ENCODE measurements at regions of chr12 and their contacts with region 1.

Region 1: DNA sequence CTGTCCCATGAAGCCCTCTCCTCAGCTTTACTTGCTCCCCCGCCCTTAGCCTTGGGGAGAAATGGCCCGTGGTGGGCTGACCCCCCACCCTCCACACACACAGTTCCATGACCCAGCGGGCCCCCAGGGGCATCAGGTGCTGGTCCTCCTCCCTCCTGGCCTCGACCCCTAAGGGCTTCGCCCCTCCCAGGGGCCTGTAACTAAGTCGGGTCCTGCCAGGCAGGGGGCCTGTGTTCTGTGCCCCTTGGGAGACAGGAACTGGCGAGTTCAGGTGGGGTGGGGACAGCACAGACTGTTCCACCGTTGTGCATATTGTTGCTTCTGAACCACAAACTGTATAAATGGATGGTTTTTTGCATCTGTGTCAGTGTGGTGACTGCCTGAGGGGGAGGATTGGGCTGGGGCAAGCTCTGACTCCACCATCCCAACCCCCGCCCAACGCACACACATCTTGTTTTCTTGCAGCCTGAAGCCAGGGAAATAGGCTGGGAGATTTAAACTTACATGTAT is 8.8 kb downstream of the TAMALIN start:
- DNase-seq: peak in 1 of 5 donors; percentile 20
- ATAC-seq: peak in 2 of 4 donors; percentile 4 to 12
- H3K4me3 ChIP-seq: no peak overlapping the region
- H3K27ac ChIP-seq: no peak overlapping the region
- H3K4me1 ChIP-seq: peaks cover 0 to 19% (median 11%) of the 10 kb centered on the region in 12 donors
- H3K27me3 ChIP-seq: peaks cover 0 to 8% (median 0%) of the 10 kb centered on the region in 9 donors
- CTCF ChIP-seq: no peak
- POLR2A ChIP-seq: no peak

Region 2: GRCh38 chr12:51970904-51971646 is 44.5 kb before region 1 on chr12:
- intact Hi-C with region 1: no loop called
- DNase-seq: no peak
- ATAC-seq: no peak
- H3K4me3 ChIP-seq: no peak overlapping the region
- H3K27ac ChIP-seq: peak overlapping the region in 1 of 12 donors; percentile 88
- H3K4me1 ChIP-seq: peaks cover 7 to 62% (median 32%) of the 10 kb centered on the region in 12 donors
- H3K27me3 ChIP-seq: no peaks in the 10 kb centered on the region
- CTCF ChIP-seq: peak in 5 of 12 donors; percentile 24 to 34 (median 28)
- POLR2A ChIP-seq: no peak

Region 3: GRCh38 chr12:51994959-51995358 is 20.6 kb before region 1 on chr12:
- intact Hi-C with region 1: loop called in 1 of 10 experiments (anchors 2 kb)
- DNase-seq: no peak
- ATAC-seq: no peak
- H3K4me3 ChIP-seq: no peak overlapping the region
- H3K27ac ChIP-seq: no peak overlapping the region
- H3K4me1 ChIP-seq: peaks cover 0 to 2% (median 0%) of the 10 kb centered on the region in 12 donors
- H3K27me3 ChIP-seq: no peaks in the 10 kb centered on the region
- CTCF ChIP-seq: no peak
- POLR2A ChIP-seq: no peak